Ascending aorta (tissue), 2 donors: ENCODE measurements at regions of chr9 and their contacts with region 1.

Region 1: DNA sequence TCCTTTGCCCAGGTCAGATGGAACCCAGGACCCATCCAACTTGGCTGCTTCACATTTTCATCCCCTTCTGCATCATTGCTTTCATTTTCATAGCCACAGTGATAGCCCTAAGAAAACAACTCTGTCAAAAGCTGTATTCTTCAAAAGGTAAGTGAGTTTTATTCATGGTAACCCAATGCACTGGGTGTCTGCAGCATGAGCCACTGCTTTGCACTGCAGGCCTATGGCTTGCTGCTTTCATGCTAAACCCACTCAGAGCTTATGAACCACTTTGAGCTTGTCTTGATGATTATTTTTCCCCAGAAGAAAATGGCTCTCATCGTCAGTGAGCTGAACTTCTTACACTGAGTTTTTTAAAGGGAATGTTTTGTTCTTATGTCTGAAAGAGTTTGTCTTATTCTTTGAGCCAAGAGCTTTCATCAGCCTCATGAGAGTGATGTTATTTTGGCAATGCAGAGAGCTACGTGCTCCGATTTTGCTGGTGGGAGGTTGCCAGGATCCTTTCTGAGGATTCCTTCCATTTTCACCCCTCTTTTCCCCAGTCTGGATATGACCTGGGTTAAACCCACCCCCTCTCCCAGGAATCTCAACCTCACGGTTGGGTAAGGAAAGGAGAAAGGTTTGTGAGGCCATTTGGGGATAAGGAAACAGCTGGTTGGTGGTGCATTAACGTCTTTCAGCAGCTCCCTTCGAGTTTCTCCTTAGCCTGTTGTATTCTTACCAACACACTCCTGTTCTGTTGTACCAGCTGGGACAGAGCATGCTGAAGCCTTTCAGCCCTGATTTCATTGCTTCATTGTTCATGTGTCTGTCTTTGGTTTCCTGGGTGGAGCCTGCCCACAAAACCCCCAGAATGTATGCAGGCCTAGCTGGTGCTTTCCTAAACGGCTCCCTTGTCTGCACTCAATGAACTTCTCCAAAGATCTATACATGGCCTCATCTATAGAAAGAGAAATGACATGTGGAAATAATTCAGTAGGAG is 47.6 kb downstream of the PDCD1LG2 start:
- DNase-seq: no peak
- H3K4me3 ChIP-seq: peak overlapping the region in 1 of 2 donors; percentile 24
- H3K27ac ChIP-seq: peak overlapping the region; percentile 80
- H3K4me1 ChIP-seq: peaks cover 8 to 42% of the 10 kb centered on the region in 2 donors
- H3K27me3 ChIP-seq: no peaks in the 10 kb centered on the region
- CTCF ChIP-seq: no peak

Region 2: GRCh38 chr9:5052838-5053237 is 505.1 kb before region 1 on chr9:
- intact Hi-C with region 1: no loop called
- DNase-seq: no peak
- H3K4me3 ChIP-seq: no peak overlapping the region
- H3K27ac ChIP-seq: peak overlapping the region; percentile 9 to 16
- H3K4me1 ChIP-seq: no peaks in the 10 kb centered on the region
- H3K27me3 ChIP-seq: no peaks in the 10 kb centered on the region
- CTCF ChIP-seq: no peak

Region 3: GRCh38 chr9:5416962-5417361 is 140.9 kb before region 1 on chr9:
- intact Hi-C with region 1: no loop called
- DNase-seq: no peak
- H3K4me3 ChIP-seq: no peak overlapping the region
- H3K27ac ChIP-seq: no peak overlapping the region
- H3K4me1 ChIP-seq: no peaks in the 10 kb centered on the region
- H3K27me3 ChIP-seq: no peaks in the 10 kb centered on the region
- CTCF ChIP-seq: no peak

Region 4: GRCh38 chr9:5479994-5480694 is 77.8 kb before region 1 on chr9:
- intact Hi-C with region 1: no loop called
- DNase-seq: no peak
- H3K4me3 ChIP-seq: no peak overlapping the region
- H3K27ac ChIP-seq: no peak overlapping the region
- H3K4me1 ChIP-seq: no peaks in the 10 kb centered on the region
- H3K27me3 ChIP-seq: no peaks in the 10 kb centered on the region
- CTCF ChIP-seq: no peak

Region 5: DNA sequence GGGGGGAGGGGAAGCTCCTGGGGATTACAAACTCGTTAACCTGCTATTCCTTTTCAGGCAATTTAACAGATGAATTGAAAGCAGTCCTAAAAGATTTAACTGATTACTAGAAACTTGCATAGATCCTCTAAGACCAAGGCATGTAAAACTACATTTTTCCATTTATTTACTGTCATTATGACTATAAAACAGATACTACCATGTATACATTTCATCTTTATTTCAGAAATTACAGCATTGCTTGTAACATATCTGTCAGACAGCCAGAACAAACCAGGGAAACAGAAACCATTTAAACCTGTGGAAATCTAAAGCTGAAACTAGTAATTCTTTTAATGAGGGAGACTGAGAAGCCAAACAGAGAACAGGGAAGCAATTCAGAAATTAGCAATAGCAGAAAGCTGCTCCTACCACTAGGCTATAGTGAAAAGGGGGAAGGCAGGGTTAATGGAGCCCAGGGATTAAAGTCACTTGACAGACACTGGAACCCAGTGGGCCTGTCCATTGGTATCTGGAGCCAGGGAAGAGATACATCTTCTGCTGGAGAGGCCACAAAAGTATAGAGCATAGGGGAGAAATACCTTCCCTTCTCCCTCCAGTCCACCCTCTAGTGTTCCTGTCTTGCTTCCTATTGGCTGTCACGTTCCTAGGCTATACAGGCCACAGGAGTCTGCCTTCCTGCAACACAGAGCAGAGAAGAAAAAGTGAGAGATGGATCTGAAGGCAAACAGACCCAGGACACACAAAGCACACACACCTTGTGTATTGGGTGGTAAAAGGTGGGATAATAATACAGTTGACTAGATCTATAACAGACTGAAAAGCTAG is 13.8 kb before region 1 on chr9:
- intact Hi-C with region 1: no loop called
- DNase-seq: no peak
- H3K4me3 ChIP-seq: no peak overlapping the region
- H3K27ac ChIP-seq: no peak overlapping the region
- H3K4me1 ChIP-seq: peaks cover 0 to 4% of the 10 kb centered on the region in 2 donors
- H3K27me3 ChIP-seq: no peaks in the 10 kb centered on the region
- CTCF ChIP-seq: no peak

Region 6: GRCh38 chr9:5575000-5575399 is 17.1 kb after region 1 on chr9:
- intact Hi-C with region 1: loop called (anchors 2 kb)
- DNase-seq: no peak
- H3K4me3 ChIP-seq: no peak overlapping the region
- H3K27ac ChIP-seq: no peak overlapping the region
- H3K4me1 ChIP-seq: no peaks in the 10 kb centered on the region
- H3K27me3 ChIP-seq: no peaks in the 10 kb centered on the region
- CTCF ChIP-seq: no peak

Region 7: GRCh38 chr9:5593904-5594303 is 36.0 kb after region 1 on chr9:
- intact Hi-C with region 1: loop called (anchors 5 kb)
- DNase-seq: no peak
- H3K4me3 ChIP-seq: no peak overlapping the region
- H3K27ac ChIP-seq: no peak overlapping the region
- H3K4me1 ChIP-seq: peaks cover 0 to 8% of the 10 kb centered on the region in 2 donors
- H3K27me3 ChIP-seq: no peaks in the 10 kb centered on the region
- CTCF ChIP-seq: no peak